Activated naive CD4-positive, alpha-beta T cell treated with anti-CD3 and anti-CD28 coated beads for 36 hours (primary cell): ENCODE measurements at regions of chr19 and their contacts with region 1.

Region 1: DNA sequence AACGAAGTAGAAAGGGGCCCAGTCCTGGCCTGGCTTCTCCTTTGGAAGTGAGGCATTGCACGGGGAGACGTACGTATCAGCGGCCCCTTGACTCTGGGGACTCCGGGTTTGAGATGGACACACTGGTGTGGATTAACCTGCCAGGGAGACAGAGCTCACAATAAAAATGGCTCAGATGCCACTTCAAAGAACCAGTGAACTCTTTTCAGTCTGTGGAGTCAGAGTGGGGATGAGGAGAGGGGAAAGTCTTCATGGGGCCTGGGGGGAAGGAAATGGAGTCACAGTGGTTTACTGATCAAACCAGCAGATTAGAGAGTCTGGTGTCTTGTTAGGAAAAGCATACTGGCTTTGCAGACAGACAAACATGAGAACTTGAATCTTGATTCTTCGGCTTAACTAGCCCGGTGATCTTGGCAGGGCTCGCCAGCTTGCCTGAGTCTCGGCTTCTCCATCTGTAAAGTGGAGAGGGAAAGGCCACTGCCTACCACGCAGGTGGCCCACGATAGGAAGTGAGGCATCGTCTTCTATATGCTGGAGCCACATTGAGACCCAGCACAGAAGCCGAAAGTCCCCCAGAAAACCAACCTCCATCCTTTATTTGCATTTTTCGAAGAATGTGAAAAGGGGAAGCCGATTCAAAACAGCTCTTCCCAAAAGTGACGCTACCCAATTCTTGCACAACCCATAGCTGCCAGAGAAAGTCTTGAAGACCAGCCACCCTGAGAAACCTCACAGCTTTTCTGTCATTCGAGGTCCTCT is at the start of gene FFAR1:
- DNase-seq: peak; percentile 91
- H3K4me3 Mint-ChIP-seq: peak within 1 kb of the TSS; percentile 46
- H3K27ac Mint-ChIP-seq: peak within 1 kb of the TSS; percentile 98
- H3K4me1 Mint-ChIP-seq: peaks cover 32% of the 10 kb centered on the region
- H3K27me3 Mint-ChIP-seq: peaks cover 2% of the 10 kb centered on the region
- total RNA-seq, gene FFAR1: 0.10 TPM in 1 of 2 experiments, not detected in the other

Region 2: DNA sequence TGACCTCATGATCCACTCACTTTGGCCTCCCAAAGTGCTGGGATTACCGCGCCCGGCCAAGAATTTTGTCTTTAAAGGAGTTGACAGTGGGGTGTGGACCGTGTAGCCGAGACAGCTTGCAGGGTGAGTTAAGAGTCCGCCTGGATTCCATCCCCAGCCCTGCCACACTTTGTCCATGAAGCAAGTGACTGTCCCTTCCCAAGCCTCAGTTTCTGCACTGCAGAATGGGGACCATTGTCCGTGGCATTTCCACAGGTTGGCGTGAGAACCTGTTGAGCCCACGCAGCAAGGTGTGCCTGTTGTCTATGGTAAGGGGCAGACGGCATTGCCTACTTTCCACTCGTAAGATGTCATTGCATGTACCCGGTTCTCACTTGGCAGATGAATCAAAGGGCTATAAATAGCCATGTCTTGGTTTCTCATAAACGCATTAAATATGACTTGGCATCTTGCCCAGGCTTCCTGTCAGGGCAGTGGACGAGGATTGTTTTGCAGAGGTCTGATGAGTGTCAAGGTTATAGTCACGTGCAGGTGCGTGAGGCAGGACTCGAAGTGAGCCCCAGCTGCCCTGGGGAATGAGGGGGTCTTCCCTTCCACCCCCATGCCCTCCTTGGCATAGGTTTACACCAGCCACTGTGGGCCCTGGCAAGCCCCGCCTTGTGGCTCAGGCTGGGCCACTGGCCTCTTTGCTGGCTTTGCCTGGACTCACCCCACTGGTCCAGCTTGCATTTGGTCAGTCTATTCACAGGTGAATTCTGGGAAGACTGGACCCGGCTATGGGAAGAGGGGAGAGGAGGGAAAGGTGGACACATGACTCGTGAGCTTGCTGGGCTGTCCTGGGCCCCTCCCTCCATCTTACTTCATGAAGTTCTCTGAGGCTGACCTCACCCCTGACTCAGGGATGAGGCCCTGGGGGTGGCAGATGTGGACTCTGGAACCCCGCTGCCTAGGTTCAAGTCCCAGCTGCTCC is 133.4 kb before region 1 on chr19:
- CTCF ChIA-PET with region 1: no interaction called
- intact Hi-C with region 1: loop called (anchors 1 kb)
- DNase-seq: peak; percentile 92
- H3K4me3 Mint-ChIP-seq: no peak overlapping the region
- H3K27ac Mint-ChIP-seq: peak overlapping the region; percentile 97
- H3K4me1 Mint-ChIP-seq: peaks cover 58% of the 10 kb centered on the region
- H3K27me3 Mint-ChIP-seq: no peaks in the 10 kb centered on the region

Region 3: GRCh38 chr19:35247526-35248306 is 99.6 kb before region 1 on chr19:
- CTCF ChIA-PET with region 1: no interaction called
- intact Hi-C with region 1: loop called (anchors 2 kb)
- DNase-seq: peak; percentile 76
- H3K4me3 Mint-ChIP-seq: peak overlapping the region; percentile 86
- H3K27ac Mint-ChIP-seq: peak overlapping the region; percentile 90
- H3K4me1 Mint-ChIP-seq: peaks cover 13% of the 10 kb centered on the region
- H3K27me3 Mint-ChIP-seq: no peaks in the 10 kb centered on the region

Region 4: GRCh38 chr19:35269421-35270117 is 77.8 kb before region 1 on chr19:
- CTCF ChIA-PET with region 1: no interaction called
- intact Hi-C with region 1: loop called (anchors 1 kb)
- DNase-seq: peak; percentile 86
- H3K4me3 Mint-ChIP-seq: peak overlapping the region; percentile 70
- H3K27ac Mint-ChIP-seq: peak overlapping the region; percentile 66
- H3K4me1 Mint-ChIP-seq: peaks cover 28% of the 10 kb centered on the region
- H3K27me3 Mint-ChIP-seq: no peaks in the 10 kb centered on the region

Region 5: DNA sequence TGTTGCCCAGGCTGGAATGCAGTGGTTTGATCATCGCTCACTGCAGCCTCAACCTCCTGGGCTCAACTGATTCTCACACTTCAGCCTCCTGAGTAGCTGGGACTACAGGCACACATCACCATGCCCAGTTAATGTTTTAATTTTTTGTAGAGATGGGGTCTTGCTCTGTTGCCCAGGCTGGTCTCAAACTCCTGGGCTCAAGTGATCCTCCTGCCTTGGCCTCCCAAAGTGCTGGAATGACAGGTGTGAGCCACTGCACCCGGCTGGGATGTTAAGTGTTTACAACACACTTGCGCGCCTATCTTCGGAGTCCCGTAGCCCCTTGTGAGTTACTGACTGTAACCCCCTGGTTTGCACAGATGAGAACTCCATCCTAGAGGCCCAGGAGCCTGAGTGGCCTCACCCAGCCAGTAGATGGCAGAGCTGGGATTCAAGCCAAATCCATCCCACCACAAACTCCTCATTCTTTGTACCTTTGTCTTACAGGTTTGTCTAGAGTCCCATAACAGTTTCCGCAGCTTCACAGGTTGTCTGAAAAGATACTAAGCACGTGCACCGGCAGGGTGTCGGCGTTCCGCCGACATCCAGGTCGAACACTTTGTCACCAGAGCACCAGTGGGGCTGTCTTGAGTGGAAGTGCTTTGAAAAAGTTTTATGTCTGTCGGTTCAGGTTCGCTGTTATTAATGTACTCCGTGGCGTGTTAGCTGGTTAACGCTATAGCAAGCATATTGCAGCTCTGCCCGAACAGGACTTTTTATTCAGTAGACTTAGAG is 40.7 kb before region 1 on chr19:
- CTCF ChIA-PET with region 1: no interaction called
- intact Hi-C with region 1: loop called (anchors 2 kb)
- DNase-seq: peak; percentile 52
- H3K4me3 Mint-ChIP-seq: no peak overlapping the region
- H3K27ac Mint-ChIP-seq: no peak overlapping the region
- H3K4me1 Mint-ChIP-seq: no peaks in the 10 kb centered on the region
- H3K27me3 Mint-ChIP-seq: no peaks in the 10 kb centered on the region

Region 6: GRCh38 chr19:35332817-35333216 is 14.5 kb before region 1 on chr19:
- CTCF ChIA-PET with region 1: interaction called, 8 read pairs
- intact Hi-C with region 1: loop called (anchors 1 kb)
- DNase-seq: peak; percentile 72
- H3K4me3 Mint-ChIP-seq: peak overlapping the region; percentile 13
- H3K27ac Mint-ChIP-seq: no peak overlapping the region
- H3K4me1 Mint-ChIP-seq: peaks cover 22% of the 10 kb centered on the region
- H3K27me3 Mint-ChIP-seq: no peaks in the 10 kb centered on the region

Region 7: GRCh38 chr19:35710784-35711723 is 363.7 kb after region 1 on chr19:
- CTCF ChIA-PET with region 1: no interaction called
- intact Hi-C with region 1: loop called (anchors 1 kb)
- DNase-seq: peak; percentile 87
- H3K4me3 Mint-ChIP-seq: peak overlapping the region; percentile 52
- H3K27ac Mint-ChIP-seq: peak overlapping the region; percentile 100
- H3K4me1 Mint-ChIP-seq: peaks cover 44% of the 10 kb centered on the region
- H3K27me3 Mint-ChIP-seq: no peaks in the 10 kb centered on the region